ENCODE measurements at regions of chr1 and their contacts with region 1.

Region 1: DNA sequence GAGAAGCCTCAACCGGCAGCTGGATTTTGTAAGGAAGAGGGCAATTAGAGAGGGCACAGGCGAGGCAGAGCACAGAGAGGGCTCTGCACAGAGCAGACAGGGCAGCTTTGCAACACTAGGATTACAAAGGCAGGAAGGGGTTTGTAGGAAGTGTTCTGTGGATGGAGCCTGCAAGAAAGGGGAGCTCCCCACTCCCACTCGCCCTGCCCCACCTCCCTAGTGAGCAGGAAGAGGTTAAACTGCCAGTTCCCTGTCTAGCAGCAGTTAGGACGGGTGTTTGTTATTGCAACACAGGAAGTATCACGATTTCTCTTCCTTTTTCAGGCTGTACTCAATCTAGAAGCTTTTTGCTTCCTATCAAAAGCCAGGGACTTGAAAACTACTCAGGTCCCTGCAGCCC is 63.3 kb upstream of the LRRC8D start:
- DNase-seq: peak; percentile 65
- H3K4me3 Mint-ChIP-seq: peak overlapping the region; percentile 67
- H3K27ac Mint-ChIP-seq: peak overlapping the region; percentile 92
- H3K4me1 Mint-ChIP-seq: peaks cover 90% of the 10 kb centered on the region
- H3K27me3 Mint-ChIP-seq: no peaks in the 10 kb centered on the region

Region 2: DNA sequence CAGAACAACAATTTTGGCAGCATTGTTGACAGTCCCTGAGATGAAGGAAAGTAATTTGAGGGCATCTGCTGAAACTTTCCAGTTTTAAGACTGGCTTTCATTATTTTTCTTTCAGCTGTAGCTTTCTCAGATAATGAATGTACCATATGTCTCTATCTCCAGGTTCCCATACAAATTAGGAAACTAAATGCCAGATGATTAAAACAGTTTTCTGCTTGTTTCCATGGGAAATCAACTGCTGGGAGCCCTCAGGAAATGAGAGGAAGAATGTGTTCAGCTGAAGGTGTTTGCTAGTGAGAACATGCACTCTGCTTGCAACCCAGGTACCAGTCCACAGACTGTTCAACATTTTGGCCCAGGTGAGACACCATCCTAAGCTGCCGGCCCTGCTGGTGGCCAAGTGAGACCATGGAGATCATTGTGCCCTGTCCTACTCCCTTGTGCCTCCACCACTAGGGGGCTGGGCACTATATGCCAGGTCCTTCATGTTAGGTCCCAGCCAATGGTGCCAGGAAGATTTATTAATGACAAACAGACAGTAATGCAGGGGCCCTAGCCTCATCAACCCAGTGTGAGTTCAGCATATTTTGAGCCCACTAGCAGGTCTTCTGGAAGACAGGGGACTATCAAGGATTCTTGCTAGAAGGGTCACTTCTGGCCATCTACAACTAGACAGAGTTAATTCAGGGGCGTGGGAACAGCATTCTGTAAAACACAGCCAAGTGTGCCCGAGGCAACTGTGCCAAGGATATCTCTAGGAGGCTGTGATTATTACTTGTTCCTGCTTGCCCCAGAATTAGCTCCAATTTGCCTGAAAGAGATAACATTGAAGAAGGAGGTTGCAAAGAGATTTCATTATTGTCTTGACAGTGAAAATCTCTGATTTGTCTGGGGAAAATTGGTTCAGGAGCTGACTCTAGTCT is 141.6 kb before region 1 on chr1:
- CTCF ChIA-PET with region 1: interaction called, 62 read pairs
- POLR2A ChIA-PET with region 1: interaction called, 73 read pairs
- DNase-seq: no peak
- H3K4me3 Mint-ChIP-seq: no peak overlapping the region
- H3K27ac Mint-ChIP-seq: no peak overlapping the region
- H3K4me1 Mint-ChIP-seq: peaks cover 83% of the 10 kb centered on the region
- H3K27me3 Mint-ChIP-seq: no peaks in the 10 kb centered on the region

Region 3: DNA sequence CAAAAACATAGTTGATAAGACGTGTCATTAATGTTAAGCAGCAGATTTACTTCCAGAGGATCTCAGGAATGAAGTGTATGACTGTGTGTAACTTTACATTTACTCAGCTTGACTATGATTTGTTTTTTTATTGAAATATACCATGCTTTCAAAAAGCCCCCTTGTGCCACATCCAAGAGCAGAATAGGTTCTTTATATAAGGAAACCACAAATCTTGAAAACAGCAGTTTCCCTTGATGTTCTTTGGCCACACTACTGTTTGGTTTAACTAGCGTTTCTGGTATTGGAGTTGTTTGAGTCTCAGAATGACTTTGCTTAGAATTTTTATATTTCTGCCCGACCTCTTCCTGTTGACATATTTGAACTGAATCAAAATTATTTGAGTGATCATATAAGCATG is 99.6 kb before region 1 on chr1:
- CTCF ChIA-PET with region 1: interaction called, 15 read pairs
- POLR2A ChIA-PET with region 1: interaction called, 11 read pairs
- DNase-seq: no peak
- H3K4me3 Mint-ChIP-seq: peak overlapping the region; percentile 15
- H3K27ac Mint-ChIP-seq: peak overlapping the region; percentile 81
- H3K4me1 Mint-ChIP-seq: peaks cover 88% of the 10 kb centered on the region
- H3K27me3 Mint-ChIP-seq: no peaks in the 10 kb centered on the region

Region 4: GRCh38 chr1:89719502-89720306 is 37.8 kb before region 1 on chr1:
- CTCF ChIA-PET with region 1: interaction called, 69 read pairs
- POLR2A ChIA-PET with region 1: interaction called, 65 read pairs
- DNase-seq: no peak
- H3K4me3 Mint-ChIP-seq: peak overlapping the region; percentile 61
- H3K27ac Mint-ChIP-seq: peak overlapping the region; percentile 97
- H3K4me1 Mint-ChIP-seq: peaks cover 88% of the 10 kb centered on the region
- H3K27me3 Mint-ChIP-seq: no peaks in the 10 kb centered on the region

Region 5: DNA sequence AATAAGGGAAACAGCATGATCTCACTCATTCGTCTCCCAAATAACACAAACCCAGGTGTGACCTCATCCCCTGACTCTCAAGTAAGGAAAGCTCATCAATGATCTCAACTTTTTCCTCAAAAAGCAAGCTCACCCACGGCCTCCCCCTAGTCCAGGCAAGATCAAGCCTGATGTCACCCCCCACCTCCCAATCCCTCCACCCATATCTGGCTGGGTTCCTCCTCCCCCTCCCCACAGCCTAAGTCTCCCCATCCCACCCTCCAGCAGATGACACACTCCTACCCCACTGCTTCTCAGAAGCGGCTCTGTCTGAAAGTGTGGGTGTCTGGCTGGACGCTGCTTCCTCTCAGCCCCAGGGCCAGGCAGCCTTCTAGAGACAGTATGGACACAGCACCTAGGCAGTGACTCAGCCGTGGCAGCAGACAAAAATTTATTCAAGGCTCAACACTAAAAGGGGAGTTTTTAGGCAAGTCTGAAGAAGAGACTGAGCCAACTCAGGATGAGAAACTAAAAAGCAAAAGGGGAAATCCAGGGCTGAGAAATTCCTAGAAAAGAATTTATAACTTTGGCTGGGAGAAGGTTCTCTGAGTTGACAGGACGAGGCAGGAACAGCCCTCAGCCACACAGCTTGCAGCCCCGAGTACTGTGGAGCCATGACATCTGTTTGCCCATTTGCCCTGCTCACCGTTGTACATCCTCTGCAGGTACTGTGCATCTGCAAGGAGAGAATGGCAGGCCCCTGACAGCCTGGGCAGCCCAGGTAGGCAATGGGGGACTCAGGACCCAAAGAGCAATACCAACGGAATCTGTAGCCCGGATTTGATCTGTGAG is 18.3 kb before region 1 on chr1:
- CTCF ChIA-PET with region 1: interaction called, 3 read pairs
- POLR2A ChIA-PET with region 1: interaction called, 16 read pairs
- DNase-seq: peak; percentile 43
- H3K4me3 Mint-ChIP-seq: peak overlapping the region; percentile 29
- H3K27ac Mint-ChIP-seq: peak overlapping the region; percentile 65
- H3K4me1 Mint-ChIP-seq: peaks cover 38% of the 10 kb centered on the region
- H3K27me3 Mint-ChIP-seq: no peaks in the 10 kb centered on the region

Measured in activated CD4-positive, alpha-beta memory T cell treated with anti-CD3 and anti-CD28 coated beads, Interleukin-2, amount 10 ng/mL, durations not matched to agents 7 days and 5 days (primary cell).